Heart left ventricle (tissue), 16 donors: ENCODE measurements at regions of chr1 and their contacts with region 1.

Region 1: DNA sequence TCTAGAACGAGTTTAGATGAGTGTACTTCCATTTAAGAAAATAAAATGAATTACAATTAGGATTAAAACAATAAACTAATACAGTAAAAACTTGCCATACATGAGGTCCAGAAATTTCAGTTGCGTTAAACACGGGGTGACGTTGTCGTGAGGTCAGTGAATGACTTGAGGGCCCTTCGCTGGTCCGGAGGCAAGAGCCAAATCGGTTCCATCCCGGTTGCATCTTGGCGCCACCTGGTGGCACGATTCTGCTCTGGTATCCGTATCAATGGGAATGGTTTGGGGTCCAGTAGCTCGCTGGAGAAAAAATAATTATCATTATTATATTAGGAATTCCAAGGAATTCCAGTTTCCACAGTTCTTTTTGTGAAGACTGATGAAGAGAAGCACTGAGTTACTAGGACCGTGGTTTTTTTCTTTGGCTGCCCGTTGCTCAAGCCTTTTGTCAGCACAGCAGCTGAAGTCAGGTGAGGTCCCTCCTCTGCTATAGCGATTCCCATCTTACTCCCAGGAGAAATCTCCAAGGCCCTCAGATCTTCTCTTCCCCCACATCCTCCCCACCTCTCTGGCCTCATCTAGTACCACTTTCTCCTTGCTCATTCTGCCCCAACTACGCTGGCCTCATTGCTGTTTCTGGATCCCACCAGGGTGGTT is 161.4 kb downstream of the SLC35F3 start:
- DNase-seq: peak; percentile 48 to 77 (median 64)
- ATAC-seq: peak in 3 of 4 donors; percentile 28 to 50 (median 50)
- H3K4me3 ChIP-seq: no peak overlapping the region
- H3K27ac ChIP-seq: no peak overlapping the region
- H3K4me1 ChIP-seq: no peaks in the 10 kb centered on the region
- H3K27me3 ChIP-seq: peaks cover 0 to 3% (median 0%) of the 10 kb centered on the region in 9 donors
- CTCF ChIP-seq: peak; percentile 51 to 86 (median 69)
- POLR2A ChIP-seq: no peak

Region 2: GRCh38 chr1:233304489-233305102 is 761.3 kb before region 1 on chr1:
- intact Hi-C with region 1: loop called in 6 of 10 experiments (anchors 5 to 10 kb)
- DNase-seq: no peak
- ATAC-seq: no peak
- H3K4me3 ChIP-seq: no peak overlapping the region
- H3K27ac ChIP-seq: no peak overlapping the region
- H3K4me1 ChIP-seq: no peaks in the 10 kb centered on the region
- H3K27me3 ChIP-seq: peaks cover 0 to 9% (median 0%) of the 10 kb centered on the region in 9 donors
- CTCF ChIP-seq: peak; percentile 46 to 83 (median 70)
- POLR2A ChIP-seq: no peak

Region 3: DNA sequence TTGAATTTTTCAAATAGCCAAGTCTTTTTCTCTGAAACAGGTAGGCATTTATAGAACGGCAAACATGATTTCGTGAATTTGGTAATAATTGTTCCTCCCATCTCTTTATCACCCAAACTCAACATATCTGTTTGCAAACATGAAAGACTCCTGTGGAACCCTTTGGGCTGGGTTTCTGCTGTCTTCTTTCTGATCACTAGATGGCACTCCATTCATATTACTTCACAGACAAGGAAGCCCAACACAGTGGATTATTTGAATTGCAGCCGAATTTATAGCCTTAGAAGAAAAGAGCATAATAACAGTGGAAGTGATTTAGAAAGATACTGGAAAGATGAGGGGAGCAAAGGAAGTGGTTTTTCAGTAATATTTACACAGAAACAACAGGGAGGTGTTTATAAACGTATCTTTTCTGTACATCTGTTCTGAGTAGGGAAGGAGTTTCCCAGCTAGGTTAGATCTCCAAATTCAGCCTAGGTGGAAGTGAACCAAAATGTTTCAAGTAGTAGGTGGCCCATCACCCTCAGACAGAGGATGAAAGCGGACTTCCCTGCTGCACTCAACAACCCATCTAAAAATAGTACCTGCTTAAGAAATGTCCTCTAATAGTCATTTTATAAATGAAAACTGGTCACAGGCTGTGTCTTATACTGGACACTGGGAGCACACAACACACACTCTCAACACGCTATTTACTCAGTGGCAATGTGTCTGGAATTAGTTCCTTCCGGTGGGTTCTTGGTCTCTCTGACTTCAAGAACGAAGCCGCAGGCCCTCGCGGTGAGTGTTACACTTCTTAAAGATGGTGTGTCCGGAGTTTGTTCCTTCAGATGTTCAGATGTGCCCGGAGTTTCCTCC is 670.8 kb before region 1 on chr1:
- intact Hi-C with region 1: loop called in 7 of 10 experiments (anchors 2 to 10 kb)
- DNase-seq: no peak
- ATAC-seq: peak in 3 of 4 donors; percentile 68 to 82 (median 69)
- H3K4me3 ChIP-seq: no peak overlapping the region
- H3K27ac ChIP-seq: no peak overlapping the region
- H3K4me1 ChIP-seq: peaks cover 0 to 8% (median 0%) of the 10 kb centered on the region in 12 donors
- H3K27me3 ChIP-seq: peaks cover 0 to 22% (median 8%) of the 10 kb centered on the region in 9 donors
- CTCF ChIP-seq: peak; percentile 49 to 80 (median 62)
- POLR2A ChIP-seq: no peak

Region 4: GRCh38 chr1:233440951-233441401 is 624.9 kb before region 1 on chr1:
- intact Hi-C with region 1: loop called (anchors 2 to 5 kb)
- DNase-seq: no peak
- ATAC-seq: peak in 2 of 4 donors; percentile 20 to 49
- H3K4me3 ChIP-seq: no peak overlapping the region
- H3K27ac ChIP-seq: no peak overlapping the region
- H3K4me1 ChIP-seq: no peaks in the 10 kb centered on the region
- H3K27me3 ChIP-seq: peaks cover 0 to 24% (median 5%) of the 10 kb centered on the region in 9 donors
- CTCF ChIP-seq: peak; percentile 28 to 72 (median 60)
- POLR2A ChIP-seq: no peak

Region 5: DNA sequence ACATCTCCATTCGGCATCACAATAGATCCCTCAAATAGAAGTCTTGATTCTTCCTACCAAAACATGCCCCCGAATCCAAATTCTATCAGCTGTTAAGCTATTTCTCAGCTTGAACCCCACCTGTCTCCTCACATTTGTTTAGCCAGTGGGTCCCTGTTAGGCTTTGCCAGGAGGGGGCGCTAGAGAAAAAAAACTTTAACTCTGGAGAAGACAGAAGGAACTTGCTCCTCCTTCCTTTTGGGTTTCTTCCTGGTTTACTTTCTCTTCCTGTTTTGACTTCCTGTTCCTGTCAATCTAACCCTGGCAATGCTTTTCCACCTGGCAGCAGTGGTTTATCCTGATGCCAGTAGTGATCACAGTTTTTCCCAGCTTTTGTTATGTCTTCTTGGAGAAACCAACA is 547.6 kb before region 1 on chr1:
- intact Hi-C with region 1: loop called in 1 of 10 experiments (anchors 5 kb)
- DNase-seq: no peak
- ATAC-seq: no peak
- H3K4me3 ChIP-seq: no peak overlapping the region
- H3K27ac ChIP-seq: no peak overlapping the region
- H3K4me1 ChIP-seq: no peaks in the 10 kb centered on the region
- H3K27me3 ChIP-seq: no peaks in the 10 kb centered on the region
- CTCF ChIP-seq: peak; percentile 32 to 61 (median 48)
- POLR2A ChIP-seq: no peak